ENCODE measurements at regions of chr20 and their contacts with region 1.

Region 1: DNA sequence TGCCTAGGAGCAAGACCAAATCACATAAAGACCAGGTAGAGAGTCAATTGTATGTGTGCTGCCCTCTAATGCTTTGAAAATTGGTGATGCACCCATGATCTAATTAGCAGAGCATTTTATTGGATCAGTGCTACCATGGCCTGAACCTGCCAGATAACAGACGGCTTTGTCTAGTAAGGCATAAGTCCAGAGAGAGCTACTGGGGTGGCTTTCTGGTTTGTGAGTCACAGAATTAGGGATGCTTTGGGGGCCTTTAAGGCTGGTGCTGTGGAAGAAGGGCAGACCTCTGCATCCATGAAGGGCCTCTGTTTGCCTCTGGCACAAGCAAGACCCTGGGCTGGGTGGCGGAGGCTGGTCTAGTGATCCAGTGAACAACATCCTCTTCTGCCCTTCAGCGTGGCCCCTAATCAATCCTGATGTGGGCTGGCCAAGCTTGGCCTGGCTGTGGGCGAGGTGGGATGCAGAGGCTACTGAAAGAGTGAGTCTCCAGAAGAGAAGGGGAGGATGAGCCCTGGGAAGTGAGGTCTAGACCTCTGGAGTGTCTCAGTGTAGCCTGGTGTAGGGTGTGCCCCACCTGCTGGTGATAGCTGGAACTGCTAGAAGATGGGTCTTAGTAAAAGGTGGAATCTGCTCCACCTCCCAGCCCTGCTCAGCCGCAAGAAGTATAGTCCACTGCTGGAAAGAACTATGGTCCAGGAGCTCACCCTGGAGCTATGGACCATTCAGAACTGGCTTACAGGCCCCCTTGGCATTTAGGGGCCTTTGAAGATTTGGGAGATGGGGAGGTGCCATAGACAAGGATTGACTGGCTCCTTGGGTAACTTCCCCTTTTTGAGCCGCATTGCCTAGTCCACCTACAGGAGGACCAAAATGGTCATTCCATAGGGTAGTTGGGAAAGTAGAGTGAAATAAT is 36.7 kb upstream of the AAR2 start:
- DNase-seq: peak; percentile 51 to 66 (median 55)
- H3K4me3 ChIP-seq: no peak overlapping the region
- H3K4me3 Mint-ChIP-seq: no peak overlapping the region
- H3K27ac ChIP-seq: no peak overlapping the region
- H3K27ac Mint-ChIP-seq: peak overlapping the region in 1 of 7 donors; percentile 64
- H3K4me1 ChIP-seq: no peaks in the 10 kb centered on the region
- H3K4me1 Mint-ChIP-seq: peaks cover 7% of the 10 kb centered on the region
- H3K27me3 ChIP-seq: peaks cover 0 to 4% of the 10 kb centered on the region in 2 donors
- H3K27me3 Mint-ChIP-seq: peaks cover 3 to 10% (median 8%) of the 10 kb centered on the region in 3 donors
- CTCF ChIP-seq: peak; percentile 95

Region 2: GRCh38 chr20:36154700-36155628 is 44.6 kb before region 1 on chr20 and contains the start of gene EPB41L1:
- intact Hi-C with region 1: loop called in 1 of 2 experiments (anchors 5 kb)
- DNase-seq: no peak
- H3K4me3 ChIP-seq: peak within 1 kb of the TSS in 1 of 3 experiments; percentile 28
- H3K4me3 Mint-ChIP-seq: peak within 1 kb of the TSS; percentile 2 to 83
- H3K27ac ChIP-seq: no peak within 1 kb of the TSS
- H3K27ac Mint-ChIP-seq: peak within 1 kb of the TSS in 1 of 7 donors; percentile 37
- H3K4me1 ChIP-seq: no peaks in the 10 kb centered on the region
- H3K4me1 Mint-ChIP-seq: peaks cover 5% of the 10 kb centered on the region
- H3K27me3 ChIP-seq: peaks cover 14 to 37% of the 10 kb centered on the region in 2 donors
- H3K27me3 Mint-ChIP-seq: peaks cover 34 to 44% (median 38%) of the 10 kb centered on the region in 3 donors
- CTCF ChIP-seq: no peak
- polyA plus RNA-seq, gene EPB41L1: 0.05 TPM in 1 of 3 donors, not detected in the others

Region 3: GRCh38 chr20:36248836-36249235 is 49.2 kb after region 1 on chr20:
- intact Hi-C with region 1: no loop called
- DNase-seq: no peak
- H3K4me3 ChIP-seq: no peak overlapping the region
- H3K4me3 Mint-ChIP-seq: no peak overlapping the region
- H3K27ac ChIP-seq: no peak overlapping the region
- H3K27ac Mint-ChIP-seq: no peak overlapping the region
- H3K4me1 ChIP-seq: no peaks in the 10 kb centered on the region
- H3K4me1 Mint-ChIP-seq: no peaks in the 10 kb centered on the region
- H3K27me3 ChIP-seq: no peaks in the 10 kb centered on the region
- H3K27me3 Mint-ChIP-seq: peaks cover 0 to 1% (median 0%) of the 10 kb centered on the region in 3 donors
- CTCF ChIP-seq: no peak

Region 4: DNA sequence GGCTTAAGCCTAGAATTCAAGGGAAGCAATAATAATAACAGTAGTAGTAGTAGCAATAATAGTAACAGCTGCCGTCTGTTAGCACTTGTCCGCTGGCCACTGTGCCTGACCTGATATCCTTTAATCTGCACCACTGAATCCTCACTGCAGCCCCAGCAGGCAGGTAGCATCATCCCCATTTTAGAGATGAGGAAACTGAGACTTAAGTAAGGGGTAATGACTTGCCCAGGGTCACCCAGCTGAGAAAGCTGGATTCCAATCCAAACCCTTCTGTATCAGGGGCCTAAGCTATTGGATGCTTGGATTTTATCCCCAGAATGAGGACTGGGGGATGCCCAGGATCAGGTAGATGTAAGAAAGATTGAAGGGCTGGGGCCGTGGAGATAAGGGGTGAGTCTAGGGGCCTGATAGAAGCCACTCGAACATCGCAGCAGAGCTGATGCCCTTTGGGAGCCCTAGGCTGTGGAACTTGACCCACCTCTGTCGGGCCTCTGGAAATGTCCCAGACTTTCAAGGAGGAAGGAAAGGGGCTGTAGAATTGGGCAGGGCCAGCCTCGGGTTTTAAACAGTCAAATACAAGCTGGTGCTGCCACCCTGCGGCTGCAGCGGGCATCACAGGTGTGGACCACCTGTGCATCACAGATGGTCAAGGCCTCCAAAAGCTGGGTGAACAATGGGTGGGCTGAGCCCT is 239.6 kb after region 1 on chr20:
- intact Hi-C with region 1: loop called in 1 of 2 experiments (anchors 5 kb)
- DNase-seq: peak; percentile 32 to 52 (median 48)
- H3K4me3 ChIP-seq: no peak overlapping the region
- H3K4me3 Mint-ChIP-seq: no peak overlapping the region
- H3K27ac ChIP-seq: no peak overlapping the region
- H3K27ac Mint-ChIP-seq: no peak overlapping the region
- H3K4me1 ChIP-seq: peaks cover 0 to 16% of the 10 kb centered on the region in 2 donors
- H3K4me1 Mint-ChIP-seq: peaks cover 10% of the 10 kb centered on the region
- H3K27me3 ChIP-seq: peaks cover 0 to 4% of the 10 kb centered on the region in 2 donors
- H3K27me3 Mint-ChIP-seq: peaks cover 12 to 18% (median 14%) of the 10 kb centered on the region in 3 donors
- CTCF ChIP-seq: peak; percentile 91

Measured in CD14-positive monocyte (primary cell).